OCI-LY7 (cell line): ENCODE measurements at regions of chr20 and their contacts with region 1.

Region 1: GRCh38 chr20:38926142-38926933 is at the start of gene FAM83D:
- DNase-seq: peak; percentile 99
- H3K4me3 ChIP-seq: peak within 1 kb of the TSS; percentile 98
- H3K27ac ChIP-seq: peak within 1 kb of the TSS; percentile 66
- H3K4me1 ChIP-seq: peaks cover 34% of the 10 kb centered on the region
- CTCF ChIP-seq: no peak; the same call in 1 of the 2 replicates
- total RNA-seq, gene FAM83D: 33.2 and 48.2 TPM in 2 replicates

Region 2: GRCh38 chr20:38962044-38962927 is 35.9 kb after region 1 on chr20 and contains the start of gene DHX35:
- CTCF ChIA-PET with region 1: interaction called, 4 read pairs
- POLR2A ChIA-PET with region 1: interaction called, 11 read pairs
- intact Hi-C with region 1: loop called (anchors 1 kb)
- DNase-seq: peak; percentile 98
- H3K4me3 ChIP-seq: peak within 1 kb of the TSS; percentile 90
- H3K27ac ChIP-seq: peak within 1 kb of the TSS; percentile 80
- H3K4me1 ChIP-seq: peaks cover 22% of the 10 kb centered on the region
- CTCF ChIP-seq: peak; percentile 70
- total RNA-seq, gene DHX35: 13.7 and 15.6 TPM in 2 replicates

Region 3: GRCh38 chr20:39049684-39050554 is 123.6 kb after region 1 on chr20:
- CTCF ChIA-PET with region 1: no interaction called
- POLR2A ChIA-PET with region 1: interaction called, 4 read pairs
- intact Hi-C with region 1: loop called (anchors 1 kb)
- DNase-seq: peak; percentile 82
- H3K4me3 ChIP-seq: peak overlapping the region; percentile 64
- H3K27ac ChIP-seq: no peak overlapping the region
- H3K4me1 ChIP-seq: peaks cover 11% of the 10 kb centered on the region
- CTCF ChIP-seq: peak; percentile 93

Region 4: DNA sequence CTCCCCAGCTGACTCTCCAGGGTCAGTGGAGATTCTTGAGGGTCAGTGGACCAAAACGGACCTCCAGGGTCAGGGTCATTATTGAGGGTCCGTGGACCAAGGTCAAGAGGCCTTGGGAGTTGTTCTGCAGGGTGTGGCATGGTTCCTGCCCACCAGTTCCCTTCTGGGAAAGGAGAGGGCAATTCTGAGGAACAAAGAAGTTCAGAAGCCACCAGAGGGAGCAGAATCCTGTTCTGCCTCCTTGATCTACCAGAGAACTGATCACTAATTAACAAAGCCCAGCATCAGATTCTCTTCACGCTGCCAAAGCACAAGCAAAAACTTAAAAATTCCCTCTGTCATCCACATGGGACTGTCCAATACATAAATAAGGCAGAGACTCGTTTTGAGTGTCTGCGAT is 299.2 kb after region 1 on chr20:
- CTCF ChIA-PET with region 1: no interaction called
- POLR2A ChIA-PET with region 1: no interaction called
- intact Hi-C with region 1: no loop called
- DNase-seq: no peak
- H3K4me3 ChIP-seq: no peak overlapping the region
- H3K27ac ChIP-seq: no peak overlapping the region
- H3K4me1 ChIP-seq: no peaks in the 10 kb centered on the region
- CTCF ChIP-seq: no peak